ENCODE measurements at regions of chr2 and their contacts with region 1.

Region 1: DNA sequence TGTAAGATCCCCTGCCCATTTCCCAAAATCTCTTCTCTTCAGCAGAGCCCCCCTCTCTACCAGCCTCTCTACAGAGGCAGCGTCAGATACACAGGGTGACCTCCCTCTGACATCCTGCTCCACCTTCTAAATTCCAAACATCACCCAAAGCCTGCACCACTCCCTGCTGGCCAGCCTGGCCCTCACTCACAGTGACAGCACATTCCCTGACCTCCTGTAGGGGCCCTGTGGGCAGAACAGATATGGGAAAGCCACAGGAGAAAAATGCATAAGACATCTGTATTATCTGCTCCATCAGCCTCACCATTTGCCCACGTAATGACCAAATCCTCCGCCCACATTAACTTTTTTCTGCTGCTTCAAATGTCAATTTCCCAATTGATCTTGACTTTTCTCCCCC is 40.6 kb downstream of the TRABD2A start:
- DNase-seq: no peak
- H3K4me3 Mint-ChIP-seq: peak overlapping the region; percentile 74
- H3K27ac Mint-ChIP-seq: peak overlapping the region; percentile 80
- H3K4me1 Mint-ChIP-seq: peaks cover 86% of the 10 kb centered on the region
- H3K27me3 Mint-ChIP-seq: no peaks in the 10 kb centered on the region

Region 2: DNA sequence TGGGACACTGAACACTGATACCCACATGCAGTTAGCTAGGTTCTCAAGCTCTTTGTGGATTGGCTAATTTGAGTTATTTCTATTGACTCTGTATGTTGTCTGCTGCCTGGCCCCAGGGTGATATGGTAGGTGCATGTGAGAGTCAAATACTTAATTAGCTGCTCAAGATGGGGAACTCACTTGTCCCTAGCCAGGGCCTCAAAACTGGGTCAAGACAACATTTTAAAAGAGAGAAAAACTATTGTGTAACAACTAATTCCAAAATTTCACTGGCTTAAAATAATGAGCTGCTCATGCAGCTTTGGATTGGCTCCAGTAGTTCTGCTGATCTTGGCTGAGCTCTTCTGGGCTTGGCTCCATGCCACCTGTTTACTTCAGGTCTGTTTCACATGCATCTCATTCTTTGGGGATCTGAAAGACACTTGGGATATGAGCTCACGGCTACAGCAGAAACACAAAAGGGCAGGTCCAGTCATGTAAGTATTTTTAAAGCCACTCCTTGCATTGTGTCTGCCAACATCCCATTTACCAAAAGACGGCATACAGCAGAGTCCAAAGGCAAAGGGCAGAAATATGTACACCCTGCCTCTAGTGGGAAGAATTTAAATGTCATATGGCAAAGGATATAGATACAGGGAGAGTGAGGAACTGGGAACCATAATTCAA is 1098.1 kb before region 1 on chr2:
- CTCF ChIA-PET with region 1: no interaction called
- intact Hi-C with region 1: no loop called
- DNase-seq: no peak
- H3K4me3 Mint-ChIP-seq: no peak overlapping the region
- H3K27ac Mint-ChIP-seq: no peak overlapping the region
- H3K4me1 Mint-ChIP-seq: no peaks in the 10 kb centered on the region
- H3K27me3 Mint-ChIP-seq: no peaks in the 10 kb centered on the region

Region 3: GRCh38 chr2:84741296-84741765 is 99.0 kb before region 1 on chr2:
- CTCF ChIA-PET with region 1: interaction called, 3 read pairs
- intact Hi-C with region 1: loop called (anchors 1 kb)
- DNase-seq: peak; percentile 79
- H3K4me3 Mint-ChIP-seq: no peak overlapping the region
- H3K27ac Mint-ChIP-seq: no peak overlapping the region
- H3K4me1 Mint-ChIP-seq: peaks cover 24% of the 10 kb centered on the region
- H3K27me3 Mint-ChIP-seq: no peaks in the 10 kb centered on the region

Measured in activated naive CD4-positive, alpha-beta T cell treated with anti-CD3 and anti-CD28 coated beads for 36 hours (primary cell).